ENCODE measurements at regions of chr19 and their contacts with region 1.

Region 1: DNA sequence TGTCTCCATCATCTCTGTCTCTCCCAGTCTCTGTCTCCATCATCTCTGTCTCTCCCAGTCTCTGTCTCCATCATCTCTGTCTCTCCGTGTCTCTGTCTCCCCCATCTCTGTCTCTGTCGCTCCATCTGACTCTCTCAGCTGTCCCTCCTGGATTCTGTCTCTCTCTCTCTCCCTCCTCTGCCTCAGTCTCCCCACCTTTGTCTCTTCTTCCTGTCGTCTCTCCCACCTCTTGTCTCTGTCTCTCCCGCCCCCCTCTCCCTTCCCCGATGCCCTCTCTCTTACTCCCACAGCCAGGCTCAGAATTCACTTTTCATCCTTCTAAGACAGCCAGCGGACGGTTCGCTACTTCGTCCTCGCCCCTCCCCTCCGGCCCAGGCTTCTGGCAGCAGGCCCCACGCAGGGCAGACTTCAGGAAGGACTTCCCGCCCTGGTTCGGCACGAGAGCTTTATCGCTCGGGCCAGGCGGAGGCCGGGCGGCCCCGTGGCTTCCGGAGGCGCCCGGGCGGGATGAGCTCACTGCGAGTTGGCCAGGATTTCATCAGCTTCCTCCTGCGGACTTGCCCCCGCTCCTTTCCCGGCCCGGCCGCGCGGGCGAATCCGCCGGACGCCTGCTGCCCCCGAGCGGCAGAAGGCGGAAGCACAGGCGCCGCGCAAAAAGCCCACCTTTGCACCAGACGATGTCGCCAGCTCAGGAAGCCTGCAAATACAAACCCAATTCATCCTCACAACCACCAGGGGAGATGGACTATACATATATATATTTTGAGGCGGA is 12.4 kb upstream of the CCDC9 start:
- DNase-seq: peak; percentile 81 to 96 (median 88)
- ATAC-seq: peak; percentile 52
- H3K4me3 ChIP-seq: peak overlapping the region; percentile 27 to 40
- H3K4me3 Mint-ChIP-seq: peak overlapping the region; percentile 65
- H3K27ac ChIP-seq: peak overlapping the region; percentile 18 to 62
- H3K27ac Mint-ChIP-seq: peak overlapping the region; percentile 75
- H3K4me1 ChIP-seq: peaks cover 47% of the 10 kb centered on the region
- H3K4me1 Mint-ChIP-seq: peaks cover 36% of the 10 kb centered on the region
- H3K27me3 ChIP-seq: no peaks in the 10 kb centered on the region
- H3K27me3 Mint-ChIP-seq: no peaks in the 10 kb centered on the region
- CTCF ChIP-seq: peak; percentile 98

Region 2: GRCh38 chr19:47143322-47144073 is 100.5 kb before region 1 on chr19:
- CTCF ChIA-PET with region 1: interaction called, 505 read pairs
- POLR2A ChIA-PET with region 1: interaction called, 12 read pairs
- intact Hi-C with region 1: no loop called
- DNase-seq: no peak
- ATAC-seq: no peak
- H3K4me3 ChIP-seq: no peak overlapping the region
- H3K4me3 Mint-ChIP-seq: no peak overlapping the region
- H3K27ac ChIP-seq: no peak overlapping the region
- H3K27ac Mint-ChIP-seq: no peak overlapping the region
- H3K4me1 ChIP-seq: peaks cover 35% of the 10 kb centered on the region
- H3K4me1 Mint-ChIP-seq: peaks cover 56% of the 10 kb centered on the region
- H3K27me3 ChIP-seq: no peaks in the 10 kb centered on the region
- H3K27me3 Mint-ChIP-seq: no peaks in the 10 kb centered on the region
- CTCF ChIP-seq: no peak

Region 3: GRCh38 chr19:47168065-47168464 is 75.9 kb before region 1 on chr19:
- CTCF ChIA-PET with region 1: interaction called, 505 read pairs
- POLR2A ChIA-PET with region 1: interaction called, 3 read pairs
- intact Hi-C with region 1: no loop called
- DNase-seq: no peak
- ATAC-seq: no peak
- H3K4me3 ChIP-seq: no peak overlapping the region
- H3K4me3 Mint-ChIP-seq: no peak overlapping the region
- H3K27ac ChIP-seq: no peak overlapping the region
- H3K27ac Mint-ChIP-seq: no peak overlapping the region
- H3K4me1 ChIP-seq: peaks cover 6% of the 10 kb centered on the region
- H3K4me1 Mint-ChIP-seq: peaks cover 33% of the 10 kb centered on the region
- H3K27me3 ChIP-seq: no peaks in the 10 kb centered on the region
- H3K27me3 Mint-ChIP-seq: no peaks in the 10 kb centered on the region
- CTCF ChIP-seq: no peak

Region 4: DNA sequence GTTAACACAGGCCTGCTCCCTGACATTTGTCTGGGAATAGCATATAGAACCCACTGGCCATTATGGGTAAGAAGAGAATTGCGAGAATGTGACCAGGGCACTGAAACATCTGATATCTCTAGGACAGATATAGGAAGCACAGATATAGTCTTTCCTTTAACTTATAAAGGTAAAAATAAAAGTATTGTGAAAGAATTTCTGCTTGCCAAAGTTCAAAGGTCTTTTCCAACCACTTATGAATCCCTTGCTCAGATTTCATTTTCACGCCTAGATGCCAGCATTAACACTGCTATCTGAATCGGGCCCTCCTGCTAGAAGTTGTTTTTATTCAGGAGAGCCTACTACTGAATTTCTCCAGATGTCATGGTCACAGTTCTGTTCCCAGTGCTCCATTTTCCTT is 40.7 kb before region 1 on chr19:
- CTCF ChIA-PET with region 1: interaction called, 320 read pairs
- POLR2A ChIA-PET with region 1: interaction called, 4 read pairs
- intact Hi-C with region 1: no loop called
- DNase-seq: no peak
- ATAC-seq: no peak
- H3K4me3 ChIP-seq: no peak overlapping the region
- H3K4me3 Mint-ChIP-seq: no peak overlapping the region
- H3K27ac ChIP-seq: no peak overlapping the region
- H3K27ac Mint-ChIP-seq: no peak overlapping the region
- H3K4me1 ChIP-seq: no peaks in the 10 kb centered on the region
- H3K4me1 Mint-ChIP-seq: peaks cover 8% of the 10 kb centered on the region
- H3K27me3 ChIP-seq: no peaks in the 10 kb centered on the region
- H3K27me3 Mint-ChIP-seq: no peaks in the 10 kb centered on the region
- CTCF ChIP-seq: no peak

Region 5: GRCh38 chr19:47231215-47231984 is 12.6 kb before region 1 on chr19:
- CTCF ChIA-PET with region 1: interaction called, 116 read pairs
- POLR2A ChIA-PET with region 1: interaction called, 32 read pairs
- intact Hi-C with region 1: loop called (anchors 1 kb)
- DNase-seq: peak; percentile 80 to 95 (median 93)
- ATAC-seq: peak; percentile 54
- H3K4me3 ChIP-seq: peak overlapping the region; percentile 59 to 66
- H3K4me3 Mint-ChIP-seq: peak overlapping the region; percentile 79
- H3K27ac ChIP-seq: peak overlapping the region; percentile 45 to 83
- H3K27ac Mint-ChIP-seq: peak overlapping the region; percentile 88
- H3K4me1 ChIP-seq: peaks cover 42% of the 10 kb centered on the region
- H3K4me1 Mint-ChIP-seq: peaks cover 28% of the 10 kb centered on the region
- H3K27me3 ChIP-seq: no peaks in the 10 kb centered on the region
- H3K27me3 Mint-ChIP-seq: no peaks in the 10 kb centered on the region
- CTCF ChIP-seq: no peak

Region 6: GRCh38 chr19:47296036-47296435 is 52.1 kb after region 1 on chr19:
- CTCF ChIA-PET with region 1: no interaction called
- POLR2A ChIA-PET with region 1: no interaction called
- intact Hi-C with region 1: no loop called
- DNase-seq: peak; percentile 41 to 87 (median 76)
- ATAC-seq: peak; percentile 91
- H3K4me3 ChIP-seq: no peak overlapping the region
- H3K4me3 Mint-ChIP-seq: no peak overlapping the region
- H3K27ac ChIP-seq: no peak overlapping the region
- H3K27ac Mint-ChIP-seq: no peak overlapping the region
- H3K4me1 ChIP-seq: no peaks in the 10 kb centered on the region
- H3K4me1 Mint-ChIP-seq: peaks cover 3% of the 10 kb centered on the region
- H3K27me3 ChIP-seq: no peaks in the 10 kb centered on the region
- H3K27me3 Mint-ChIP-seq: no peaks in the 10 kb centered on the region
- CTCF ChIP-seq: peak; percentile 68

Region 7: DNA sequence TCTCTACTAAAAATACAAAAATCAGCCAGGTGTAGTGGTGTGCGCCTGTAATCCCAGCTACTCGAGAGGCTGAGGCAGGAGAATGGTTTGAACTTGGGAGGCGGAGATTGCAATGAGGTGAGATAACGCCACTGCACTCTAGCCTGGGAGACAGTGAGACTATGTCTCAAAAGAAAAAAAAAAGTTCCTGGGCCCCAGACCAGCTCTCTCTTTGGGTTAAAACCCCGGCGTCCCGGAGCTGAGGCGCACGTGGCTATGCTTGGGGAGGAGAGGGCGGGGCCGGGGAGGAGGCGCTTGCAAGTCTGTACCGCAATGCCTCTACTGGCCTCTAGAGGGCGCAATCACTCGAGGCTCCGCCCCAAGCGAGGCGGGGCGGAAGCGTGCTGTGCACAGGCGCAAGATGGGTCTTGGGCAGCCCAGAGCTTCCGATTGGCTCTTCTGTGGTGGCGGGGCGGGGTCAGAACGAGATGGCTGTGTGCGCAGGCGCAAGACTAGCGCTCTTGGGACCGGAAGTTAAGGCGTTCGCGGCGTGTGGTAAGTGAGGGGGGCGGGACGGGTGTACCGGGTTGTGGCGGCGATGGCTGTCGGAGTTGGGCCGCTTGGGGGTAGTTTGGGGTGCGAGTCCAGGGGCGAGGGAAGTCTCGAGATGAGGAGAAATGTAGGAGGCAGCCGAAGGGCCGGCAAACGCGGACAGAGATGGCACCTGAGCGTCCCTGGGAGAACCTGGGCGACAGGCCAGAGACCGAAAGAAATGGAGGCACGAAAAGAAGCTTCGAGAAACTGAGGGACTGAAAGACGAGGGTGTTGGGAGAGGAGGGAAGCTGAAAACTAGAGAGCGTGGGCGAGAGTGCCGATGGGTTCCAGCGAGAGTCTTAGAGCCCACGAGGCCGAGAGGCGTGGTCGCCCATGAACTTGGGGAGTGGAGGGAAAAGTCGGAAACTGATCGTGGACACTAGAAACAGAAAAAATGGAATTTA is 105.1 kb after region 1 on chr19 and contains the start of gene DHX34:
- CTCF ChIA-PET with region 1: no interaction called
- POLR2A ChIA-PET with region 1: no interaction called
- intact Hi-C with region 1: no loop called
- DNase-seq: peak; percentile 98 to 100 (median 99)
- ATAC-seq: peak; percentile 98
- H3K4me3 ChIP-seq: peak within 1 kb of the TSS; percentile 88 to 93
- H3K4me3 Mint-ChIP-seq: peak within 1 kb of the TSS; percentile 98
- H3K27ac ChIP-seq: peak within 1 kb of the TSS; percentile 71 to 72
- H3K27ac Mint-ChIP-seq: peak within 1 kb of the TSS; percentile 91
- H3K4me1 ChIP-seq: peaks cover 25% of the 10 kb centered on the region
- H3K4me1 Mint-ChIP-seq: peaks cover 38% of the 10 kb centered on the region
- H3K27me3 ChIP-seq: no peaks in the 10 kb centered on the region
- H3K27me3 Mint-ChIP-seq: peaks cover 3% of the 10 kb centered on the region
- CTCF ChIP-seq: peak; percentile 72
- total RNA-seq, gene DHX34: 7.7 to 8.1 TPM